Heart left ventricle (tissue), 16 donors: ENCODE measurements at regions of chr7 and their contacts with region 1.

Region 1: GRCh38 chr7:14902589-14903067 is at the start of gene DGKB:
- DNase-seq: peak; percentile 36 to 57 (median 40)
- ATAC-seq: peak; percentile 58 to 88 (median 81)
- H3K4me3 ChIP-seq: peak within 1 kb of the TSS; percentile 7 to 54 (median 45)
- H3K27ac ChIP-seq: peak within 1 kb of the TSS in 6 of 12 donors; percentile 11 to 49 (median 34)
- H3K4me1 ChIP-seq: peaks cover 0 to 6% (median 0%) of the 10 kb centered on the region in 12 donors
- H3K27me3 ChIP-seq: no peaks in the 10 kb centered on the region
- CTCF ChIP-seq: no peak
- POLR2A ChIP-seq: no peak
- total RNA-seq, gene DGKB: 0.22 to 1.6 (median 0.54) TPM in 8 of 9 donors, not detected in the other

Region 2: DNA sequence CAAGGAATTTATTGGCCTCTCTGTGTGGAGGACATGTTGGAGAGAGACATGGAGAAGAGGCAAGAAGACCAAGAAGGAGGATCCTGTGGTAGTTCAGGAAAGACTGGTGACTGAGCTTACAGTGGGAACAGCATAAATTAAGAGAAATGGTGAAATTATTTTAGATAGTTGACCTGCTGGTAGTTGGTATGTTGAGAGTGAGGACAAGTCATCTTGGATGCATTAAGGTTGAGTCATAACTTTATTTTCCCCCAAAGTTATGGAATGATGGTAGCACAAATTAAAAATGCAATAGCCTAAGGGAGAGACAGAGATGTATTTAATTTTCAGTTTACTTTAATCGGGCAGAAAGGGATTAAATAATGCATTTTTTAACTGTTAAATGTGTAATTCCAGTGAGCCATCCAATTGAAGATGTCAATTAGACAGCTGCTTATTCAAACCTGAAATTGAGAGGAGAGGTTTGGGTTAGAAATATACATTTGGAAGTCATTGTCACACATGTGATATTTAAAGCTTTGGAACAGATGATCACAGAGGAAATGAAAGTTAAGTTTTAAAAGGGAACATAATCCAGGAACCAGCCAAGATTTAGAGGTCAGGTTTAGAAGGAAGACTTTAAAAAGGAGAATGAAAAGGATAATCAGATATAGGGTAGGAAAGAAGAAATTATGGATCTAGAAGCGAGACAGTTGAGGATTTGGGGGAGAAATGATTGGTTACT is 80.7 kb before region 1 on chr7:
- intact Hi-C with region 1: no loop called
- DNase-seq: no peak
- ATAC-seq: no peak
- H3K4me3 ChIP-seq: no peak overlapping the region
- H3K27ac ChIP-seq: no peak overlapping the region
- H3K4me1 ChIP-seq: peaks cover 0 to 6% (median 0%) of the 10 kb centered on the region in 12 donors
- H3K27me3 ChIP-seq: no peaks in the 10 kb centered on the region
- CTCF ChIP-seq: no peak
- POLR2A ChIP-seq: no peak

Region 3: GRCh38 chr7:14841850-14842249 is 60.8 kb before region 1 on chr7:
- intact Hi-C with region 1: loop called in 1 of 10 experiments (anchors 10 kb)
- DNase-seq: no peak
- ATAC-seq: no peak
- H3K4me3 ChIP-seq: no peak overlapping the region
- H3K27ac ChIP-seq: no peak overlapping the region
- H3K4me1 ChIP-seq: peaks cover 0 to 11% (median under 1%) of the 10 kb centered on the region in 12 donors
- H3K27me3 ChIP-seq: no peaks in the 10 kb centered on the region
- CTCF ChIP-seq: no peak
- POLR2A ChIP-seq: no peak

Region 4: GRCh38 chr7:15007507-15007906 is 104.9 kb after region 1 on chr7:
- intact Hi-C with region 1: no loop called
- DNase-seq: no peak
- ATAC-seq: no peak
- H3K4me3 ChIP-seq: no peak overlapping the region
- H3K27ac ChIP-seq: no peak overlapping the region
- H3K4me1 ChIP-seq: peaks cover 0 to 7% (median 0%) of the 10 kb centered on the region in 12 donors
- H3K27me3 ChIP-seq: no peaks in the 10 kb centered on the region
- CTCF ChIP-seq: no peak
- POLR2A ChIP-seq: no peak